ENCODE measurements at regions of chr3 and their contacts with region 1.

Region 1: DNA sequence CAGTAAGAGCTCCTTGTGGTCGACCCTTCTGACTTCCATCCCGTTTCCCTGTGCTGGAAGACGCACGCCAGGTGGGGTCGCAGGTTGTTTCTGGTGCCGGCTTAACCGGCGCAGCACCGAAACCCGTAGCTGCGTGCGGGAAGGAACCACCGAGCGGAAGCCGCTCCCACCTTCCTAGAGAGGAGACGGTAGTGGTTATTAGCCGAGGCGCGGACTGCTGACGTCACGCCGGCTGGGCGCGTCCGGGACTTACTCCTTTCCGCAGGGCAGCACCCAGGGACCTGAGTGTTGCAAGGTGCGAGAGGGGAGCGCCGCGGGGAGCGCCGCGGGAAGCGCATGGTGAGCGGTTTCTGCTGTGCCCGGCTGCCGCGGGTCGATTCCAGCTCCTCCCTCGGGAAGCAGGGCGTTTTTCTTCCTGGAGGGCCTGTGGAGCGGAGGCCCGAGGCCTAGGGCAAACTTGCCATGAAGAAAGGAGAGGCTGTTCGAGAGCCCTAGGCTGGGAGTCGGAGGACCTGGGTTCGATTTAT is at the start of gene ZNF501:
- DNase-seq: peak; percentile 79 to 88 (median 82)
- H3K4me3 ChIP-seq: peak within 1 kb of the TSS; percentile 71 to 79
- H3K4me3 Mint-ChIP-seq: peak within 1 kb of the TSS; percentile 90 to 99 (median 94)
- H3K27ac ChIP-seq: peak within 1 kb of the TSS; percentile 34
- H3K27ac Mint-ChIP-seq: peak within 1 kb of the TSS; percentile 78 to 93 (median 87)
- H3K4me1 ChIP-seq: peaks cover 6% of the 10 kb centered on the region
- H3K4me1 Mint-ChIP-seq: peaks cover 10 to 21% (median 16%) of the 10 kb centered on the region in 4 donors
- H3K27me3 ChIP-seq: no peaks in the 10 kb centered on the region
- H3K27me3 Mint-ChIP-seq: peaks cover 0 to 1% of the 10 kb centered on the region in 2 donors
- total RNA-seq, gene ZNF501: 7.4 to 7.5 TPM

Region 2: GRCh38 chr3:44477312-44478030 is 252.0 kb before region 1 on chr3 and contains the start of gene ZNF445:
- CTCF ChIA-PET with region 1: no interaction called
- POLR2A ChIA-PET with region 1: interaction called, 7 read pairs
- intact Hi-C with region 1: loop called (anchors 1 kb)
- DNase-seq: peak; percentile 72 to 82 (median 81)
- H3K4me3 ChIP-seq: peak within 1 kb of the TSS; percentile 44 to 68
- H3K4me3 Mint-ChIP-seq: peak within 1 kb of the TSS; percentile 93 to 98 (median 94)
- H3K27ac ChIP-seq: peak within 1 kb of the TSS; percentile 42
- H3K27ac Mint-ChIP-seq: peak within 1 kb of the TSS; percentile 79 to 96 (median 90)
- H3K4me1 ChIP-seq: peaks cover 28% of the 10 kb centered on the region
- H3K4me1 Mint-ChIP-seq: peaks cover 17 to 50% (median 32%) of the 10 kb centered on the region in 4 donors
- H3K27me3 ChIP-seq: no peaks in the 10 kb centered on the region
- H3K27me3 Mint-ChIP-seq: no peaks in the 10 kb centered on the region
- total RNA-seq, gene ZNF445: 30.0 to 31.5 TPM

Region 3: GRCh38 chr3:44495636-44496415 is 233.6 kb before region 1 on chr3:
- CTCF ChIA-PET with region 1: no interaction called
- POLR2A ChIA-PET with region 1: no interaction called
- intact Hi-C with region 1: no loop called
- DNase-seq: no peak
- H3K4me3 ChIP-seq: no peak overlapping the region
- H3K4me3 Mint-ChIP-seq: no peak overlapping the region
- H3K27ac ChIP-seq: no peak overlapping the region
- H3K27ac Mint-ChIP-seq: no peak overlapping the region
- H3K4me1 ChIP-seq: no peaks in the 10 kb centered on the region
- H3K4me1 Mint-ChIP-seq: no peaks in the 10 kb centered on the region
- H3K27me3 ChIP-seq: no peaks in the 10 kb centered on the region
- H3K27me3 Mint-ChIP-seq: no peaks in the 10 kb centered on the region

Region 4: DNA sequence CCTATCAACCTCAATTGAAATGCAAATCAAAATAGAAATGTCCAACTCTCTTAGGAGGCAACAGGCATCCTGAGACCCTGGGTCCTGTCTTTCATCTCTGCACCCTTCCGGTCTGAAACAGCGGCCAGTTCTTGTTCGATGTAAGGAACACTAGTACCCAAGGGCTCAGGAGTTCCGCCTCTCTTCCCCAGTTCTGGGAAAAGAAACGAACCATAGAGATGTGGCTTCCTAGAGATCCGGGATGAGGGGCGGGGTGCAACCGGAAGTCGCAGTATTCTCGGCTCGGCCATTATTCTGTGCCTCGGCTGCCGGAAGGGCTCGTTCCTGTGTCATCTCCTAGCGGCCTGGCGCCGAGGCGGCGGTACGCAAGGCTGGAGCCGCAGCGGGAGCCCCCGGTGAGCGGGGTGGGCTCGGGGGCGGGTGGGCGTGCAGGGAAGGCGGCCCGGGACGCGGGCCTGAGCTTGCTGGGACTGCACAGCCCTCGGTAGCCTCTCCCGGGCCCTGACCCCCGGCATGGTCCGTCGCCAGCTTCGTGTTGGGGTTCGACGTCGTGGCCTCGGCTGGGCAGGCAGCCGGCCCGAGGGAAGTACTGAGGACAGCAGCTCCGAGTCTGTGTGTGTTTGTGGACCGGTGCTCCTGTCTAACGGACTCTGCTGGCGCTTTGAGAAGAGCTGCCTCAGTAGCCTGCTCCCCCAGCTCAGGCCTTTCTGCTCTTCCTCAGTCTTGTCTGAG is 104.5 kb before region 1 on chr3 and contains the start of gene ZNF197:
- CTCF ChIA-PET with region 1: no interaction called
- POLR2A ChIA-PET with region 1: interaction called, 11 read pairs
- intact Hi-C with region 1: no loop called
- DNase-seq: peak; percentile 23 to 44 (median 42)
- H3K4me3 ChIP-seq: peak within 1 kb of the TSS; percentile 47 to 59
- H3K4me3 Mint-ChIP-seq: peak within 1 kb of the TSS; percentile 90 to 95 (median 92)
- H3K27ac ChIP-seq: peak within 1 kb of the TSS; percentile 49
- H3K27ac Mint-ChIP-seq: peak within 1 kb of the TSS; percentile 74 to 92 (median 87)
- H3K4me1 ChIP-seq: peaks cover 21% of the 10 kb centered on the region
- H3K4me1 Mint-ChIP-seq: peaks cover 20 to 47% (median 27%) of the 10 kb centered on the region in 4 donors
- H3K27me3 ChIP-seq: no peaks in the 10 kb centered on the region
- H3K27me3 Mint-ChIP-seq: no peaks in the 10 kb centered on the region
- total RNA-seq, gene ZNF197: 18.0 to 18.4 TPM

Region 5: DNA sequence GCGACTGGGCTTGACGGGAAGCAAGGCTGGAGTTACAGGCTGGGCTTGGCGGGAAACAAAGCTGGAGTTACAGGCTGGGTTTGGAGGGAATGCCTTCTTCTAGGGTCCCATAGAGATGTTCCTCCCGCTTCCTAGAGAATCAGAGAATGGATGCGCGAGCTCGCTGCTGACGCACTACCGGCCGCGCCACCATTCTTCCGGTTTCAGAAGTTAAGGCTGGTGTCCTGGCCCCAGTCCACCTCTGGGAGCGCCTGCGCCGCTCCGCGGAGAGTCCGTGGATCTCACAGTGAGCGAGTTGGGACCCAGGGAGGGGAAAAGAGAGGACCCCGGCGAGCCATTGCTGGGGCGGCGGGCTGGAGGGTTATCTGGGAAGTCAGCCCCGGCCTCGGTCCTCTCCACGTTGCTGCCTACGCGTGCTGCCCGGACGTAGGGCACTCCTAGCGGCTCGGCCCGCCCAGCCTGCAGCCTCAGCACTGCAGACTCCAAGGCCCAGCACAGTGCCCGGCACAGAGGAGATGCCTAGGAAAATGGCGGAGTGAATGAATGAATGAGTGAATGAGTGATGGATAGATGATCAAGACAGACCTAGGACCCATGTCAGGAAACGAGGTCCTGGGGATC is 16.9 kb before region 1 on chr3 and contains the start of gene ZNF502:
- CTCF ChIA-PET with region 1: interaction called, 5 read pairs
- POLR2A ChIA-PET with region 1: interaction called, 18 read pairs
- intact Hi-C with region 1: loop called (anchors 1 kb)
- DNase-seq: peak; percentile 39 to 53 (median 48)
- H3K4me3 ChIP-seq: peak within 1 kb of the TSS; percentile 18 to 74
- H3K4me3 Mint-ChIP-seq: peak within 1 kb of the TSS; percentile 63 to 96 (median 90)
- H3K27ac ChIP-seq: no peak within 1 kb of the TSS
- H3K27ac Mint-ChIP-seq: peak within 1 kb of the TSS in 6 of 7 donors; percentile 47 to 90 (median 79)
- H3K4me1 ChIP-seq: peaks cover 6% of the 10 kb centered on the region
- H3K4me1 Mint-ChIP-seq: peaks cover 4 to 24% (median 11%) of the 10 kb centered on the region in 4 donors
- H3K27me3 ChIP-seq: no peaks in the 10 kb centered on the region
- H3K27me3 Mint-ChIP-seq: peaks cover 5 to 15% of the 10 kb centered on the region in 2 donors
- total RNA-seq, gene ZNF502: 3.1 to 3.4 TPM